ENCODE measurements at regions of chr1 and their contacts with region 1.

Region 1: GRCh38 chr1:16960560-16961296 is 19.7 kb downstream of the MFAP2 start:
- DNase-seq: peak; percentile 62 to 87 (median 74)
- ATAC-seq: peak; percentile 87
- H3K4me3 ChIP-seq: peak overlapping the region; percentile 47
- H3K4me3 Mint-ChIP-seq: peak overlapping the region; percentile 76
- H3K27ac ChIP-seq: no peak overlapping the region
- H3K27ac Mint-ChIP-seq: no peak overlapping the region
- H3K4me1 ChIP-seq: peaks cover 16% of the 10 kb centered on the region
- H3K4me1 Mint-ChIP-seq: peaks cover 10% of the 10 kb centered on the region
- H3K27me3 ChIP-seq: no peaks in the 10 kb centered on the region
- H3K27me3 Mint-ChIP-seq: no peaks in the 10 kb centered on the region
- CTCF ChIP-seq: peak; percentile 73

Region 2: GRCh38 chr1:16727190-16728111 is 233.3 kb before region 1 on chr1:
- CTCF ChIA-PET with region 1: no interaction called
- POLR2A ChIA-PET with region 1: no interaction called
- intact Hi-C with region 1: loop called in 1 of 2 experiments (anchors 10 kb)
- DNase-seq: peak in 8 of 14 experiments; percentile 12 to 64 (median 40)
- ATAC-seq: peak; percentile 44
- H3K4me3 ChIP-seq: peak overlapping the region; percentile 2
- H3K4me3 Mint-ChIP-seq: no peak overlapping the region
- H3K27ac ChIP-seq: no peak overlapping the region
- H3K27ac Mint-ChIP-seq: no peak overlapping the region
- H3K4me1 ChIP-seq: peaks cover 11% of the 10 kb centered on the region
- H3K4me1 Mint-ChIP-seq: no peaks in the 10 kb centered on the region
- H3K27me3 ChIP-seq: peaks cover 5 to 12% of the 10 kb centered on the region in 2 experiments
- H3K27me3 Mint-ChIP-seq: no peaks in the 10 kb centered on the region
- CTCF ChIP-seq: no peak

Region 3: DNA sequence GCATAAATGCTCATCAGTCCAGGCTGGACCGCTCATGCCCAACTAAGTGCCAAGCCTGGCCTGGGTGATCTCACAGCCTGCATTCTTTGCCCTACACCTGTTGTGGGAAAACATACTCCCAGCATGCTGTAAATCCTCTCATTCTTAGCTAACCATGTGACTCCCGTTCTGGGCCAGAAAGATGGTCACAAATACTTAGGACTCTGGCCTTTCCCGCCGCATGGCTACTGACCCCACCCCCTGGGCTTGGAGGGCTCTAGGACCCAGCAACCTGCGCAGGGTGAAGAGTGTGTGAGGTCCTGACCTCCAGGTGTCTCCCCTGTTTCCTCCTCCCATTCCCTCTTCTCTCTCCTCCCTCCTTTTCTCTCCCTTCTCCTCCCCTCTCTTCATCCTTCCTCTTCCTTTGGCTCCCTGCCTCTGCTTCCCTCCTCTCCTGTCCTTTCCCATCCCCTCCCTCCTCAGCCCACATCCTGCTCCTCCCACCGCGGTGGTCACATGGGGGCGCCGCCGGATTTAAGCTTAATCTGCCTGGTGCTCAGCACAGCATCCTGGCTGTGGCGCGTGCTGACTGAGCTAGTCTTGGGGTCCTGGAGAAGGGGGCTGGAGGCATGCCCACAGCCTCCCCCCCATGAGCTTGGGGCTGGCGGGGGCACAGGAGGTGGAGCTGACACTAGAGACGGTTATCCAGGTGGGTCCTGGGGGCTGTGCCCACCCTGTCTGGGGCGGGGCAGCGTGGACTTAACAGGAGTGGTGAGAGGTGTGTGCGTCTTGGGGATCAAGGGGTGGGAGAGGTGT is 39.1 kb before region 1 on chr1 and contains the start of gene CROCC:
- CTCF ChIA-PET with region 1: no interaction called
- POLR2A ChIA-PET with region 1: no interaction called
- intact Hi-C with region 1: loop called in 1 of 2 experiments (anchors 5 kb)
- DNase-seq: peak in 11 of 14 experiments; percentile 22 to 68 (median 41)
- ATAC-seq: peak; percentile 85
- H3K4me3 ChIP-seq: peak within 1 kb of the TSS; percentile 20
- H3K4me3 Mint-ChIP-seq: peak within 1 kb of the TSS; percentile 55
- H3K27ac ChIP-seq: no peak within 1 kb of the TSS
- H3K27ac Mint-ChIP-seq: no peak within 1 kb of the TSS
- H3K4me1 ChIP-seq: peaks cover 30% of the 10 kb centered on the region
- H3K4me1 Mint-ChIP-seq: peaks cover 30% of the 10 kb centered on the region
- H3K27me3 ChIP-seq: no peaks in the 10 kb centered on the region
- H3K27me3 Mint-ChIP-seq: no peaks in the 10 kb centered on the region
- CTCF ChIP-seq: no peak
- total RNA-seq, gene CROCC: 47.4 to 49.7 TPM

Region 4: GRCh38 chr1:16946646-16947045 is 14.1 kb before region 1 on chr1:
- CTCF ChIA-PET with region 1: interaction called, 24 read pairs
- POLR2A ChIA-PET with region 1: no interaction called
- intact Hi-C with region 1: no loop called
- DNase-seq: no peak
- ATAC-seq: no peak
- H3K4me3 ChIP-seq: no peak overlapping the region
- H3K4me3 Mint-ChIP-seq: no peak overlapping the region
- H3K27ac ChIP-seq: no peak overlapping the region
- H3K27ac Mint-ChIP-seq: no peak overlapping the region
- H3K4me1 ChIP-seq: peaks cover 3% of the 10 kb centered on the region
- H3K4me1 Mint-ChIP-seq: peaks cover 3% of the 10 kb centered on the region
- H3K27me3 ChIP-seq: no peaks in the 10 kb centered on the region
- H3K27me3 Mint-ChIP-seq: no peaks in the 10 kb centered on the region
- CTCF ChIP-seq: no peak

Region 5: GRCh38 chr1:17011439-17012307 is 50.9 kb after region 1 on chr1 and contains the start of gene ATP13A2:
- CTCF ChIA-PET with region 1: no interaction called
- POLR2A ChIA-PET with region 1: no interaction called
- intact Hi-C with region 1: loop called in 1 of 2 experiments (anchors 2 kb)
- DNase-seq: peak; percentile 64 to 94 (median 80)
- ATAC-seq: peak; percentile 99
- H3K4me3 ChIP-seq: peak within 1 kb of the TSS; percentile 73
- H3K4me3 Mint-ChIP-seq: peak within 1 kb of the TSS; percentile 90
- H3K27ac ChIP-seq: no peak within 1 kb of the TSS
- H3K27ac Mint-ChIP-seq: peak within 1 kb of the TSS; percentile 73
- H3K4me1 ChIP-seq: peaks cover 35% of the 10 kb centered on the region
- H3K4me1 Mint-ChIP-seq: peaks cover 16% of the 10 kb centered on the region
- H3K27me3 ChIP-seq: no peaks in the 10 kb centered on the region
- H3K27me3 Mint-ChIP-seq: no peaks in the 10 kb centered on the region
- CTCF ChIP-seq: no peak
- total RNA-seq, gene ATP13A2: 27.0 to 30.6 TPM

Region 6: DNA sequence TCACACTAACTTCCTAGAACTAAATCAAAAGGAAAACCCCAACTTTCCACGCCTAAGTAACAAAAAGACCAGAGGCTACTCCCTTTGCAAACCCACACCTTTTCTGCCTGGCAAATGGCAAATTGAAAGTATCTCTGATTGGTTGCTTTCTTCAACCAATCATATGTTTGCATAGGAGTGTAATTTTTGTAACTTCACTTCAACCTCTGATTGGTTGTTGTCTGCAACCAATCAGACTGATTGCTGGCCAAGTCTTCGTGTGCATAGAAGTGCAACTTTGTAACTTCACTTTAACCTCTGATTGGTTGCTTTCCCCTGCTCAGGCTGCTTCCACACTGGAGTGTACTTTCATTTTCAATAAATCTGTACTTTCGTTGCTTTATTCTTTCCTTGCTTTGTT is 195.4 kb after region 1 on chr1:
- CTCF ChIA-PET with region 1: no interaction called
- POLR2A ChIA-PET with region 1: no interaction called
- intact Hi-C with region 1: no loop called
- DNase-seq: peak in 1 of 14 experiments; percentile 4
- ATAC-seq: no peak
- H3K4me3 ChIP-seq: no peak overlapping the region
- H3K4me3 Mint-ChIP-seq: no peak overlapping the region
- H3K27ac ChIP-seq: no peak overlapping the region
- H3K27ac Mint-ChIP-seq: no peak overlapping the region
- H3K4me1 ChIP-seq: no peaks in the 10 kb centered on the region
- H3K4me1 Mint-ChIP-seq: no peaks in the 10 kb centered on the region
- H3K27me3 ChIP-seq: peaks cover 0 to 11% of the 10 kb centered on the region in 2 experiments
- H3K27me3 Mint-ChIP-seq: peaks cover 28% of the 10 kb centered on the region
- CTCF ChIP-seq: no peak